ENCODE measurements at regions of chr17 and their contacts with region 1.

Region 1: DNA sequence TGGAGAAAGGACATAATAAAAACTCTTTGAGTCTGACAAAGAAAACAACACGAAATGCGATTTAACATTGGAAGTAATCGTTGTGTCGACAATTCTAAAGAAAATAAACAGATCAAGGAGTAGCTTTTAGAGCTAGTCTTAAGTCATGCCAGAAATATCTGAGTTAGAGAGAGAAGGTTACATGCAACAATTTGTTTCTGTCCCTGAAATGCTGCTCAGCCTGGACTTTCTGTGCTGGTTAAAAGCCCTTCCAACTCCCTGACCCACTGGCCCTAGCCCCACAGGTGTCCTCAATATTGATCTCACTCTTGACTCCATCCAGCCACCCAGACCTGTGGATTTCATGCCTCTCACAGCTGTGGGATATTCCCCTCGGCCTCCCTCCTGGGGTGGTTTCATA is 33.2 kb upstream of the TEX2 start:
- DNase-seq: no peak
- ATAC-seq: no peak
- H3K4me3 ChIP-seq: no peak overlapping the region
- H3K27ac ChIP-seq: no peak overlapping the region
- H3K4me1 ChIP-seq: no peaks in the 10 kb centered on the region
- H3K27me3 ChIP-seq: no peaks in the 10 kb centered on the region
- CTCF ChIP-seq: no peak

Region 2: GRCh38 chr17:64200080-64201032 is 95.9 kb before region 1 on chr17:
- CTCF ChIA-PET with region 1: no interaction called
- POLR2A ChIA-PET with region 1: no interaction called
- in situ Hi-C with region 1: no loop called
- intact Hi-C with region 1: no loop called
- DNase-seq: no peak
- ATAC-seq: no peak
- H3K4me3 ChIP-seq: no peak overlapping the region
- H3K27ac ChIP-seq: no peak overlapping the region
- H3K4me1 ChIP-seq: no peaks in the 10 kb centered on the region
- H3K27me3 ChIP-seq: no peaks in the 10 kb centered on the region
- CTCF ChIP-seq: no peak

Region 3: DNA sequence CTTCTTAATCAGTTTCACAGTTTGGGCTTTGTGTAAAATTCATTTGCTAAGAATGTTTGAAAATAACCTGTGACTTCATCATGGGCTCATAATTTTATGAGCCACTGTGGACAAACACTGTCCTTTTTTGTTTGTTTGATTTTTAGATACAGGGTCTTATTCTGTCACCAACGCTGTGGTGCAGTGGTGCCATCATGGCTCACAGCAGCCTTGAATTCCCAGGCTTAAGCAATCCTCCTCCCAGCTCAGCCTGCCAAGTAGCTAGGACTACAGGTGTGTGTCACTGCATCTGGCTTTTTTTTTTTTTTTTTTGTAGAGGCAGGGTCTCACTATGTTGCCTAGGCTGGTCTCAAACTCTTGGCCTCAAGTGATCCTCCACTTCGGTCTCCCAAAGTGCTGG is 41.5 kb before region 1 on chr17:
- CTCF ChIA-PET with region 1: interaction called, 12 read pairs
- POLR2A ChIA-PET with region 1: no interaction called
- in situ Hi-C with region 1: no loop called
- intact Hi-C with region 1: no loop called
- DNase-seq: no peak
- ATAC-seq: no peak
- H3K4me3 ChIP-seq: no peak overlapping the region
- H3K27ac ChIP-seq: no peak overlapping the region
- H3K4me1 ChIP-seq: 0 out of 2 replicates have a peak, but pooled peaks cover 3% of the 10 kb centered on the region
- H3K27me3 ChIP-seq: no peaks in the 10 kb centered on the region
- CTCF ChIP-seq: no peak

Region 4: DNA sequence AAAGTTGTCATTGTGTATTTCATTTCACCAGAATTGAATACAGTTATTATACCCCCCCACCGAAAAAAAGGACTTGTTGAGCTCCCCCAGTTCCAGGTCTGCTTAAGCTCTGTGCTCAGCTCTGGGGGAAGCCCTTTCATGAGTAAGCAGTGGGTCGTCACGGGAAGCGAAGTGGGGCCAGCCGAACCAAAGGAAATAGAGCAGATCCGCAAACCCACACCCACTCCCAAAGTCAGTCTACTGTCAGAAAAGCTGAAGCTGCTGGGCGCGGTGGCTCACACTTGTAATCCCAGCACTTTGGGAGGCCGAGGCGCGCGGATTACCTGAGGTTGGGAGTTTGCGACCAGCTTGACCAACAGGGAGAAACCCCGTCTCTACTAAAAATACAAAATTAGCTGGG is 44.3 kb after region 1 on chr17:
- CTCF ChIA-PET with region 1: interaction called, 11 read pairs
- POLR2A ChIA-PET with region 1: no interaction called
- in situ Hi-C with region 1: no loop called
- intact Hi-C with region 1: no loop called
- DNase-seq: no peak
- ATAC-seq: no peak
- H3K4me3 ChIP-seq: no peak overlapping the region
- H3K27ac ChIP-seq: no peak overlapping the region
- H3K4me1 ChIP-seq: no peaks in the 10 kb centered on the region
- H3K27me3 ChIP-seq: no peaks in the 10 kb centered on the region
- CTCF ChIP-seq: no peak

Measured in Panc1 (cell line).